Body of pancreas (tissue), 4 donors: ENCODE measurements at regions of chr5 and their contacts with region 1.

Region 1: DNA sequence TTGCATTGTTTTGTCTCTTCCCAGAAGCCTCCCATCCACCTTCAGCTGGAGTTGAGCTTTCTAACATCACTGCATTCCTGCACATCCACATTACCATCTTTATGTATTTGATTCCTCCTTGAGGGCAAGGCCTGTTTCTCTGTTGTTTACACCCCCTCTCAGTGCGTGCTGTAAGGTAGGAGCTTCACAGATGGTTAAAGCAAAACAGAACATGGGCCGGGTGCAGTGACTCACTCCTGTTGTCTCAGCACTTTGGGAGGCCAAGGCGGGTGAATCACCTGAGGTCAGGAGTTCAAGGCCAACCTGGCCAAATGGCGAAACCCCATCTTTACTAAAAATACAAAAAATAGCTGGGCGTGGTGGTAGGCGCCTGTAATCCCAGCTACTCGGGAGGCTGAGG is 110.9 kb downstream of the KCNIP1 start:
- DNase-seq: no peak
- ATAC-seq: no peak
- H3K4me3 ChIP-seq: no peak overlapping the region
- H3K27ac ChIP-seq: no peak overlapping the region
- H3K4me1 ChIP-seq: no peaks in the 10 kb centered on the region
- H3K27me3 ChIP-seq: no peaks in the 10 kb centered on the region
- CTCF ChIP-seq: no peak
- POLR2A ChIP-seq: no peak

Region 2: GRCh38 chr5:170444969-170445505 is 169.7 kb before region 1 on chr5:
- intact Hi-C with region 1: loop called (anchors 5 kb)
- DNase-seq: no peak
- ATAC-seq: no peak
- H3K4me3 ChIP-seq: no peak overlapping the region
- H3K27ac ChIP-seq: no peak overlapping the region
- H3K4me1 ChIP-seq: no peaks in the 10 kb centered on the region
- H3K27me3 ChIP-seq: no peaks in the 10 kb centered on the region
- CTCF ChIP-seq: no peak
- POLR2A ChIP-seq: no peak

Region 3: GRCh38 chr5:170491479-170491878 is 123.2 kb before region 1 on chr5:
- intact Hi-C with region 1: no loop called
- DNase-seq: peak; percentile 12 to 64 (median 32)
- ATAC-seq: peak; percentile 90
- H3K4me3 ChIP-seq: no peak overlapping the region
- H3K27ac ChIP-seq: peak overlapping the region; percentile 54 to 83 (median 76)
- H3K4me1 ChIP-seq: peaks cover 15% of the 10 kb centered on the region
- H3K27me3 ChIP-seq: no peaks in the 10 kb centered on the region
- CTCF ChIP-seq: peak in 1 of 7 experiments; percentile 12
- POLR2A ChIP-seq: peak in 1 of 3 donors; percentile 24

Region 4: GRCh38 chr5:171462928-171463862 is 848.5 kb after region 1 on chr5:
- intact Hi-C with region 1: no loop called
- DNase-seq: no peak
- ATAC-seq: no peak
- H3K4me3 ChIP-seq: no peak overlapping the region
- H3K27ac ChIP-seq: no peak overlapping the region
- H3K4me1 ChIP-seq: no peaks in the 10 kb centered on the region
- H3K27me3 ChIP-seq: no peaks in the 10 kb centered on the region
- CTCF ChIP-seq: no peak
- POLR2A ChIP-seq: no peak